Activated T-helper 1 cell treated with anti-CD3 and anti-CD28 coated beads, Interleukin-12 subunit alpha, Interleukin-12 subunit beta, Interleukin-2, Interleukin-4 antibody, amounts not matched to agents 30 ng/mL and 10 ng/mL and 1 ng/mL, durations not matched to agents 14 hours and 24 hours and 36 hours (primary cell): ENCODE measurements at regions of chr10 and their contacts with region 1.

Region 1: GRCh38 chr10:88932539-88933256 is 19.9 kb downstream of the ACTA2 start:
- DNase-seq: peak; percentile 30
- H3K4me3 Mint-ChIP-seq: no peak overlapping the region
- H3K27ac Mint-ChIP-seq: no peak overlapping the region
- H3K4me1 Mint-ChIP-seq: peaks cover 36% of the 10 kb centered on the region
- H3K27me3 Mint-ChIP-seq: no peaks in the 10 kb centered on the region

Region 2: DNA sequence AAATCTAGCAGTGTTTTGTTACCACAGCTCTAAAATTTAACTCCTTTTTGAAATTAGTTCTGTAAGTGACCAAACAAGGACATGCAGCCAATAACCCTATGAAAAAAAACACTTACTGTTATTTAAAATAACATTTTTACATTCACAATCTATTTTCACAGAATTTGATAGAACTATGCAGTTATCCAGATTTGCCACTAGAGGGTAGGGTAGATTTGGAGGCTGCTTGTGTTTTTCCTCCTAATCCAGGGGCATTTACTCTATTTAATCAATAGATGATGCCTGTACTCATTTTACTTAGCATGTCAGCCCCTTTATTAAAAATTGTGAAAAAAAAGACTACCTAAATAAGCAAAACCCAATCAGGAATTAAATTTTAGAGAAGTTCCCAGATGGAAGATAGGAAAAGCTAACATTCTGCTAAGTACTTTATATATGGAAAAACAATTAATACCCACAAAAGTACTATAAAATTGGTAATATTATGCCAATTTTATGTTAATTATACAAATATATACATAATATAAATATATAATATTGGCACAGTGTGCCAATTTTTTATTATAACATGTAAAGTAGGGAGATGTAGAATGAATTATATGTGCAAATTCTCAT is 244.7 kb before region 1 on chr10:
- intact Hi-C with region 1: loop called (anchors 1 kb)
- DNase-seq: no peak
- H3K4me3 Mint-ChIP-seq: no peak overlapping the region
- H3K27ac Mint-ChIP-seq: no peak overlapping the region
- H3K4me1 Mint-ChIP-seq: no peaks in the 10 kb centered on the region
- H3K27me3 Mint-ChIP-seq: peaks cover 39% of the 10 kb centered on the region

Region 3: DNA sequence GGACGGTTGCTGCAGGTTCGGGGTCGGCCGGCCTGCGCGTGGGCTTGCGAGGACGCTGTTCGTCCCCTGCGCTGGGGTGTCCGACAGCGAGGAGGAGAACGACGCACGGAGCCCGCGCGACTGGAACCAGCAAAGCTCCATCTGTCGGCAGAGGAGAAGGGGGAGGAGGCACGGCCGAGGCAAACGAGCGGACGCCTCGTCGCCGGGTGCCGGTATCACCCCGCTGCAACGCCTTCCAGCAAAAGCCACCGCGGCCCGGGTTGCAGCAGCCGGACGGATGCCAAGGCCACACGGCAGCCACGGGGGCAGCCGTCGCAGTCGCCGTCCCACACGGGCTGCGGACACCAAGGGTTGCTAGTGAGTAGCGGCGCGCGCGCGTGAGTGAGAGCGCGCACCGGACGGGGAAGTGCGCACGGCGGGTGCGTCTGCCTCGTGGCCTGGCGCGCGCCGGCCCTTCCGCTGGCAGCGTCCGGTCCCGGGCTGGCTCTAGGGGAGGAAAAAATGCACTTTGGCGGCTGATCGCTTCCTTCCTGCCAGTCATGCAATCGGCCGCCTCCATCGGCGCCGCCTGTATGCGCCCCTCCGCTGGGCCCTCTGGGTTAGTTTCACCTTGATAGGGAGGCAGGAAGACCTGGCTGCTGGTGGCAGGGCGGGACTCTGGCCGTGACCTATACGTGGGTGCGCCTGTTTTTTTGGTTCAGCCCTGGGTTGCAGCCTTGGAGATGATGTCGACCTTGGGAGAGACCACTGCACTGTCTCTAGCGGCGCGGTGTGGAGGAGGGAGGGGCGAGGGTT is 52.2 kb before region 1 on chr10:
- intact Hi-C with region 1: loop called (anchors 1 kb)
- DNase-seq: peak; percentile 68
- H3K4me3 Mint-ChIP-seq: peak overlapping the region; percentile 98
- H3K27ac Mint-ChIP-seq: peak overlapping the region; percentile 99
- H3K4me1 Mint-ChIP-seq: peaks cover 74% of the 10 kb centered on the region
- H3K27me3 Mint-ChIP-seq: no peaks in the 10 kb centered on the region

Region 4: DNA sequence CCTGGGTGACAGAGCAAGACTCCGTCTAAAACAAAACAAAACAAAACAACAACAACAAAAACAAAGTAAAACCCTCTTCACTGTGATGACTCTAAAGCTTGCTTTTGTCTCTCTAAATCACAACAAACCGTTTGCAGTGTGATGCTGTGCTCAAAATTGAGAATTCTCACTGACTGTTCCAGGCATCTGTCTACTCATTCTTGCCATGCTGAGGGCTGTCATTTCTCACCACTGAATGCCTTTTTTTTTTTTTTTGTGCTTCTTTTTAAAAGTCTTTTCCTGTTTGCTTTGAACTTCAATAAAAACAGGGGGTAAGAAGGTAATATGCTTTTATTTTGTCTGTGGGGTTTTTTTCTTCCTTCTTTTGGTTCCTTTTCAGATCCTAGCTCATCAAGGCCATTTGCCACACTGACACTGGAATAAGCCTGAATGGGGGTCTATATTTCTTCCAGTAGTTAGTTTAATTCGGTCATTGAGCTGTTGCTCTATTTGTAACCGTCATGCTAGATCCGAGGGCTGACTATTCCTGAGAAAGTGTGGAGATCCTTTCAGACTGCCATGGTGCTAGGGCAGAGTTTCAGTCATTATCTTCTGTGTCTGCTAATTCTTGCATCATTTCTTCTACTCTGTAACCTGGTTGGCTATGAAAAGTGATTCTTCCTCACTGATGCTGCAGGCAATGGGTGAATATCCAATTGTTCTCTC is 68.5 kb after region 1 on chr10:
- intact Hi-C with region 1: loop called (anchors 1 kb)
- DNase-seq: no peak
- H3K4me3 Mint-ChIP-seq: peak overlapping the region; percentile 37
- H3K27ac Mint-ChIP-seq: peak overlapping the region; percentile 81
- H3K4me1 Mint-ChIP-seq: peaks cover 76% of the 10 kb centered on the region
- H3K27me3 Mint-ChIP-seq: no peaks in the 10 kb centered on the region

Region 5: DNA sequence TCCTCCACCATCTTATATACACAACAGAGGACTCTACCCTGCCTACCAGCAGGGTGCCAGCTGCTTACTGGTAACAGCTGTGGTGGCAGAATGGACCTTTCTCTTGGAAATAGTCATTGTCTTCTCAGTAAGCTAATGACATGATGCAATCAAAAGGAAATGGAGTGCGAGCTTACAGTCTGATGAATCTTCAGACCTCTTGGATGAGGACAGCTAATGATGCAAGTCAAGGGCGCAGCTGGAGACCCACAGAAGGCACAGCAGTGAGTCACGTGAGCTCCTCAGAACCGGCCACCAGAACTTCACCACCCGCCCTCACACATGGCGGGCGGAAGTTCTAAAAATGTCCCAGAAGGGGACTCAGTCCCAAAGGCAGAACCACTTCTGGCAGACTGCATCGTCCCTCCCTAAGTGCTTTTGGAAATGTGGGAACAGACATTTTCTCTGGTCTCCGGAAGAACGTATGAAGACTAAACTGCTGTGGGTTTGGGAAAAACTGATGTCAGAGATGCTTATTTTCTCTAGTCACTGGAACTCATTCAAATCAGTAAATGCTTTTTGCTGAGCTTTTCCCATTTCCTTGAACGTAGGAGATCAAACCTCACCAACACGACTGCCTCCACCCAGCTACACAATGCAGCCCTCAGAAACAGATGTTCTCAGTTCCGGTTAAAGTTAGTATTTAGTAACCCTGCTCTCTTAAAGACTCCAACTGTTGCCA is 154.3 kb after region 1 on chr10:
- intact Hi-C with region 1: loop called (anchors 2 kb)
- DNase-seq: no peak
- H3K4me3 Mint-ChIP-seq: no peak overlapping the region
- H3K27ac Mint-ChIP-seq: no peak overlapping the region
- H3K4me1 Mint-ChIP-seq: peaks cover 9% of the 10 kb centered on the region
- H3K27me3 Mint-ChIP-seq: peaks cover 15% of the 10 kb centered on the region

Region 6: DNA sequence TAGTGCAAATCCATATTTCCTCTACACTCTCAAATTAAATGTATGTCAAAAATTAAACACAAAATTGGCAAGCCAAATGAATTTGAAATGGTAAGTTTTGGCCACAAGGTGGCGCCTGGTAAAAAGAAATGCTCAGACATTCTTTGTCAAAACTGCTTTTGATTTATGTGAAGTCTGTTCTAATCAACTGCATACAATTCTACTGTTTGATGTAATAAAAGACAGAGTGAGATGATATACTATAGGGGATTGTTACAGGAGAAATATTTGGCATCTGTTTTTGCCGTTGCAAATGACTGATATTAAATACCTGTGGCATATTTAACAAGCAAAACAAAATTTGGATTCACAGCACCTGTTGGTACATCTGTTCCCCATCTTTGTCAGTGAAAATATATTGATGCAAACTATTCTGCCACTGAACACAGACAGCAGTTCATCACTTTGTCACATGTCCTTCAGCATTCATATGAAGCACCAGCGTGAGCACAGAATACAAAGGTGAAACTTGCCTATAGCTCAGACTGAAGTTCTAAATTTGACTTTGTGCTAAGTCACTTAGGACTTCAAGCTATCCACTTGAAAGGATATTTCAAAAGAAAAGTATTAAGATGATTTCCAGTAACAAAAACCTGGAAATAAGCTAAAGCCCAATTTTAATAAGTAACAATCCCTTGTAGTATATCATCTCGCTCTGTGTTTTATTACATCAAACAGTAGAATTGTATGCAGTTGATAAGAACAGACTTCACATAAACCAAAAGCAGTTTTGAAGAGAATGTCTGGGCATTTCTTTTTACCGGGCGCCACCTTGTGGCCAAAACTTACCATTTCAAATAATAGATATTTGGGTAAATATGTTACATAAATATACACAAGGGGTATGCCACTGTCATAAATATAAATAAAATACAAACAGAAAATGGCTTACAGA is 284.6 kb after region 1 on chr10:
- intact Hi-C with region 1: loop called (anchors 1 kb)
- DNase-seq: peak; percentile 22
- H3K4me3 Mint-ChIP-seq: no peak overlapping the region
- H3K27ac Mint-ChIP-seq: no peak overlapping the region
- H3K4me1 Mint-ChIP-seq: peaks cover 17% of the 10 kb centered on the region
- H3K27me3 Mint-ChIP-seq: peaks cover 1% of the 10 kb centered on the region